Activated CD4-positive, alpha-beta memory T cell treated with anti-CD3 and anti-CD28 coated beads, Interleukin-2, amount 10 ng/mL, durations not matched to agents 7 days and 5 days (primary cell): ENCODE measurements at regions of chr7 and their contacts with region 1.

Region 1: DNA sequence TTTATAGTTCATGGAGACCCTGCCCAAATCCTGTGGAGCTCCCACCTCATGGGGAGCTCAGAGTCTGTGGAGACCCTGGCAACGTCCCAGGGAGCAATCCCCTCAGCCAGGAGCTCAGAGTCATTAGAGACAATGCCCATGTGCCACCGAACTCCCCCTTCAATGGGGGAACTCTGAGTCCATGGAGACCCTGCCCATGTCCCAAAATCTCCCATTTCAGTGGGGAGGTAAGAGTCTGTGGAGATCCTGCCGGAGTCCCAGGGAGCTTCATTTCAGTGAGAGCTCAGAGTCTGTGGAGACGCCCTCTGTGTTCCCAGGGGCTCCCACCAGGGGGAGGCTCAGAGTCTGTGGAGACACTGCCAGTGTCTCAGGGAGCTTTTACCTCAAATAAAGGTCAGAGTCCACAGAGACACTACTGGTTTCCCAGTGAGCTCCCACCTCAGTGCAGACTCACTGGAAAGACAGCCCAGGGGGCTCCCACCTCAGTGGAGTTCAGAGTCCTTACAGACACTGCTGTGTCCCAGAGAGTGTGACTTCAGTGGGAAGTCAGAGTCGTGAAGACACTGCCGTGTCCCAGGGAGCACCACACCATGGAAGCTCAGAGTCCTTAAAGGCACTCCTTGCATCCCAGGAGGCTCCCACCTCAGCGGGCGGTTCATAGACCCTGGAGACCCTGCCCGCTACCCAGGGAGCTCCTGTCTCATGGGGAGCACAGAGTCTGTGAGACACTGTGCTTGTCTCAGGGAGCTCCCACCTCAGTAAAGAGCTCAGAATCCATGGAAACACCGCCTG is 5.0 kb downstream of the MYO1G start:
- DNase-seq: peak; percentile 66
- H3K4me3 Mint-ChIP-seq: peak overlapping the region; percentile 43
- H3K27ac Mint-ChIP-seq: peak overlapping the region; percentile 44
- H3K4me1 Mint-ChIP-seq: peaks cover 55% of the 10 kb centered on the region
- H3K27me3 Mint-ChIP-seq: no peaks in the 10 kb centered on the region

Region 2: GRCh38 chr7:44824894-44825526 is 148.8 kb before region 1 on chr7:
- CTCF ChIA-PET with region 1: no interaction called
- POLR2A ChIA-PET with region 1: no interaction called
- DNase-seq: no peak
- H3K4me3 Mint-ChIP-seq: no peak overlapping the region
- H3K27ac Mint-ChIP-seq: peak overlapping the region; percentile 9
- H3K4me1 Mint-ChIP-seq: peaks cover 16% of the 10 kb centered on the region
- H3K27me3 Mint-ChIP-seq: no peaks in the 10 kb centered on the region

Region 3: GRCh38 chr7:44867073-44867995 is 106.5 kb before region 1 on chr7:
- CTCF ChIA-PET with region 1: no interaction called
- POLR2A ChIA-PET with region 1: no interaction called
- DNase-seq: peak; percentile 28
- H3K4me3 Mint-ChIP-seq: no peak overlapping the region
- H3K27ac Mint-ChIP-seq: no peak overlapping the region
- H3K4me1 Mint-ChIP-seq: peaks cover 9% of the 10 kb centered on the region
- H3K27me3 Mint-ChIP-seq: peaks cover 5% of the 10 kb centered on the region

Region 4: GRCh38 chr7:44962483-44963251 is 11.1 kb before region 1 on chr7:
- CTCF ChIA-PET with region 1: interaction called, 10 read pairs
- POLR2A ChIA-PET with region 1: interaction called, 517 read pairs
- DNase-seq: no peak
- H3K4me3 Mint-ChIP-seq: no peak overlapping the region
- H3K27ac Mint-ChIP-seq: no peak overlapping the region
- H3K4me1 Mint-ChIP-seq: peaks cover 23% of the 10 kb centered on the region
- H3K27me3 Mint-ChIP-seq: no peaks in the 10 kb centered on the region

Region 5: GRCh38 chr7:45026984-45027773 is 53.4 kb after region 1 on chr7:
- CTCF ChIA-PET with region 1: interaction called, 36 read pairs
- POLR2A ChIA-PET with region 1: interaction called, 412 read pairs
- DNase-seq: peak; percentile 46
- H3K4me3 Mint-ChIP-seq: peak overlapping the region; percentile 83
- H3K27ac Mint-ChIP-seq: peak overlapping the region; percentile 81
- H3K4me1 Mint-ChIP-seq: peaks cover 64% of the 10 kb centered on the region
- H3K27me3 Mint-ChIP-seq: no peaks in the 10 kb centered on the region

Region 6: DNA sequence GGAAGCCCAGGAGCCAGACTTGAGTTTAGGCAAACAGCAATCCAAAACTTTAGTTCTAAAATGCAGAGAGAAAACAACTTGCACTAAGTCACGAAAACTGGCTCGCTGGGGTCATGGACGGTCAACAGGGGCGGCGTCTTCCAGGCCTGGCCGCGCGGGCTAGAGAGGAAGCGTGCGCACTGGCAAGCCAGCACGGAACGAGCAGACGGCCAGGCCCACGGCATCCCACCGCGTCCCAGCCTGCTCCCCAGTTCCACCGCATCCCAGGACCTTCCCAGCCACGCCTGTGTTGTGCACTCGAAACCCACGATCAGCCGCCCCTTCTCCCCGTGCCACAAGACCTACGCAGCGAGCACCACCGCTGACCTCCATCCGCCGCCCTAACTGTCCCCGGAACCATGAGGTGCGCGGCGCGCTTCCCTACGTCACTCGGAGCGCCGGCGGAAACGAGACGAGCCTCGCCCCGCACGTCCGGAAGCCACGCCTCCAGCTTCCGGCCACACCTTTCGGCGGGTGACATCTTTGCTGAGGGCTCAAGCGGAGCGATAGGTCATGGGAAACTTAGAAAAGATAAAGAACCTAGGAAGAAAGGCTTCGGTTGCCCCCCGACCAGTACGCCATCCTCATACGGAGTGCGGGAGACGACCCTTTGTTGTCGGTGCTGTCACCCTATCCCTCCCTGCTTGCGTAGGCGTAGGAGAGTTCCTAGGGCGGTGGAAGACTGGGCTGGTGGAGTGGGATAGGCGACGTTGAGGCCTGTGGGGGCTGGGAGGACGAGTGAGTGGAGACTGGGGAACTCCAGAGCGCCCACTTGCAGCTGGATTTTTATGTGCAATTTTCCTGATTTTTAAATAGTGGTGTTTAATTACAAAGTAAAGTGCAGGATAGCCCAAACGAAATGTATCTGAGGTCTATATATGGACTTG is 137.8 kb after region 1 on chr7 and contains the start of gene TBRG4:
- CTCF ChIA-PET with region 1: interaction called, 17 read pairs
- POLR2A ChIA-PET with region 1: interaction called, 68 read pairs
- DNase-seq: peak; percentile 96
- H3K4me3 Mint-ChIP-seq: peak within 1 kb of the TSS; percentile 90
- H3K27ac Mint-ChIP-seq: peak within 1 kb of the TSS; percentile 89
- H3K4me1 Mint-ChIP-seq: peaks cover 50% of the 10 kb centered on the region
- H3K27me3 Mint-ChIP-seq: peaks cover 10% of the 10 kb centered on the region
- total RNA-seq, gene TBRG4: 98.8 to 103 TPM